ENCODE measurements at regions of chr7 and their contacts with region 1.

Region 1: DNA sequence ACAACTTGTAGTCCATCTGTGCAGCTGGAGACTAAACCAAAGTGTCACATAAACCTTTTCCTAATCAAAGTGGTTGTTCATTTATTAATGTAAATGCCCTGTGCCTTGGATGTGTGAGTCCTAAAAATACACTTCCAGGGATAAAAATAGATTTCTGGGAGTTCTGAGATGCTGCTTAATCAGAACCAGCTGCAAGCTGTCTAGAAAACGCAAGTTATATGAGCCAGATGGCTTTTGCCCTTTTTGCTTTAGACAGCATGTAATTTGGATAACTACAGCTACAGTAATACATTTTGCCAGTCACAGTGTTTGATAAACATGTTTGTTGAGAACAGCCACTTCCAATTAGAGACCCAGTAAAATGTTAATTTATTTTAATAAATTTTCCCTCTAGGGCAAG is 185.1 kb upstream of the PRPS1L1 start:
- DNase-seq: peak; percentile 58
- H3K4me3 ChIP-seq: no peak overlapping the region
- H3K27ac ChIP-seq: peak overlapping the region; percentile 9 to 88; a peak in 2 of 4 replicates
- H3K4me1 ChIP-seq: peaks cover 0 to 17% of the 10 kb centered on the region in 2 experiments; a peak in 2 of 4 replicates
- H3K27me3 ChIP-seq: no peaks in the 10 kb centered on the region
- CTCF ChIP-seq: no peak
- EP300 ChIP-seq: peak; percentile 33 to 93; a peak in 3 of 4 replicates
- RAD21 ChIP-seq: no peak; the same call in 1 of the 2 replicates

Region 2: GRCh38 chr7:18191341-18191740 is 21.4 kb before region 1 on chr7:
- CTCF ChIA-PET with region 1: interaction called, 12 read pairs
- POLR2A ChIA-PET with region 1: no interaction called
- DNase-seq: no peak
- H3K4me3 ChIP-seq: no peak overlapping the region
- H3K27ac ChIP-seq: no peak overlapping the region
- H3K4me1 ChIP-seq: no peaks in the 10 kb centered on the region; a peak in 1 of 4 replicates
- H3K27me3 ChIP-seq: peaks cover 7% of the 10 kb centered on the region; the same call in 1 of the 2 replicates
- CTCF ChIP-seq: no peak
- EP300 ChIP-seq: no peak
- RAD21 ChIP-seq: no peak

Region 3: GRCh38 chr7:18225067-18225466 is 12.3 kb after region 1 on chr7:
- CTCF ChIA-PET with region 1: interaction called, 14 read pairs
- POLR2A ChIA-PET with region 1: no interaction called
- DNase-seq: no peak
- H3K4me3 ChIP-seq: no peak overlapping the region
- H3K27ac ChIP-seq: no peak overlapping the region
- H3K4me1 ChIP-seq: no peaks in the 10 kb centered on the region; a peak in 1 of 4 replicates
- H3K27me3 ChIP-seq: no peaks in the 10 kb centered on the region; the same call in 1 of the 2 replicates
- CTCF ChIP-seq: no peak
- EP300 ChIP-seq: no peak
- RAD21 ChIP-seq: no peak

Region 4: GRCh38 chr7:18243731-18244130 is 31.0 kb after region 1 on chr7:
- CTCF ChIA-PET with region 1: no interaction called
- POLR2A ChIA-PET with region 1: no interaction called
- DNase-seq: no peak
- H3K4me3 ChIP-seq: no peak overlapping the region
- H3K27ac ChIP-seq: no peak overlapping the region
- H3K4me1 ChIP-seq: no peaks in the 10 kb centered on the region
- H3K27me3 ChIP-seq: peaks cover 5% of the 10 kb centered on the region; the same call in 1 of the 2 replicates
- CTCF ChIP-seq: no peak
- EP300 ChIP-seq: no peak
- RAD21 ChIP-seq: no peak

Measured in SK-N-SH (cell line).